ENCODE measurements at regions of chrX and their contacts with region 1.

Region 1: GRCh38 chrX:51435101-51435500 is 61.3 kb downstream of the NUDT11 start:
- DNase-seq: no peak
- H3K4me3 ChIP-seq: no peak overlapping the region
- H3K4me1 ChIP-seq: no peaks in the 10 kb centered on the region
- H3K27me3 ChIP-seq: peaks cover 2% of the 10 kb centered on the region; the same call in 1 of the 2 replicates

Region 2: DNA sequence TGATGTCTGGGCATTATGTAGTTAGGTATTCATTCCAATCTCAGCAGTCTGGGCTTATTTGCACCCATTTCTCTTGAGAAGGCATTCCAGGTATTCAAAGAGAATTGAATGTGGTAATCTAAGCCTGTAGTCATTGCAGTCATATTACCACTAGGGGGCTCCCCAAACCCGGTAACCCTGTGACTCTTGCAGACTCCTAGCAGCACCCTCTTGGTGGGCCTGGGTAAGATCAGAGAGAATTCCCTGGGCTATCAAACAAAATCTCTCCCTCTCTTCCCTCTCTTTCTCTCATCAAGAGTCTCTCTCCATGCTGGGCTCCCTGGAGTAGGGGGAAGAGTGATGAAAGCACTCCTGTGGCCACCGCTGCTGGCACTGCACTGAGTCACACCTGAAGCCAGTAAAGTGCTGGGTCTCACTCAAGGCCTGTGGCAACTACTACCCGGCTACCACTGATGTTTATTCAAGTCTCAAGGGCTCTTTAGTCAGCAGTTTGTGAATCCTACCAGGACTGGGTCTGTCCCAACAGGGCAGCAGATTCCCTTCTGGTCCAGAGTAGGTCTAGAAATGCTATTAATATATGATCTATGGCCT is 290.2 kb before region 1 on chrX:
- in situ Hi-C with region 1: loop called (anchors 25 kb)
- DNase-seq: peak; percentile 67 to 79
- H3K4me3 ChIP-seq: no peak overlapping the region
- H3K4me1 ChIP-seq: peaks cover 2% of the 10 kb centered on the region; the same call in 1 of the 2 replicates
- H3K27me3 ChIP-seq: peaks cover 12% of the 10 kb centered on the region

Region 3: DNA sequence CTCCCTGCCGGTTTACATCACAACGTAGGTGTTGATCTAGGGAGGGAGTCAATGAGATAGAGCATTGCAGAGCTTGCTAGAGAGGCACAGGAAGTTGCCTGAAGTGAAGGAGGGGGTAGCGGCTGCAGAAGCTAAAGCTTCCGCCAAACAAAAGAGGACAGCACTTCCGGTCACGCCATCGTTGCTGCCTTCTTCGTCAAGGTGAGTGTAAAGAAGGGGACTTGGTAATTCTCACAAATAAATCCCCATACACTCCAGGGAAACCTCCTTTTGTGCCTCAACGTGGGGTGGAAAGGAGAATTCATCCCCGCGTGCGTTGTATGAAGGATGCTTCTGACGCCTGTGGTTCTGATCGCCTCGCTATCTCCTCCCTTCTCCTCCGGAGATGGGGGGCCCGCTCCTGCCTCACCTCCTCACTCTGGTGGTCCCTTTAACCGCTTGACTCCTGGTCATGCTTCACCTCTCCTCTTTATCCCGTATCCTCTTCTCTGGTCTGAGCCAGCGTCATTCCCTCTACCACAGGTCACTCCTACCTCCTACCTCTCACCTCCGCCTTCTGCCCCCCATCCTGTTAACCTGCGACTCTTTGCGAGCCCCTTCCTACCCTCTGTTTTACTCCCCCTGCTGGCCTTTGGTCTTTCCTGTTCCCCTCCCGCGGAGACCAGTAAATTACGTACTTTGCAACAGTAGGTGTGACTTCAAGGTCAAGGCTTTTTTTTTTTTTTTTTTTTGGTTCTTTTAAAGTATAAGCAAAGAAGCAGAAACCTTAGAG is 368.0 kb after region 1 on chrX:
- in situ Hi-C with region 1: no loop called
- DNase-seq: peak; percentile 7 to 57
- H3K4me3 ChIP-seq: peak overlapping the region; percentile 19
- H3K4me1 ChIP-seq: no peaks in the 10 kb centered on the region; the same call in 1 of the 2 replicates
- H3K27me3 ChIP-seq: no peaks in the 10 kb centered on the region

Measured in HAP-1 (cell line).